Right ventricle myocardium inferior (tissue), 1 donor: ENCODE measurements at regions of chr2 and their contacts with region 1.

Region 1: GRCh38 chr2:101252408-101253012 is at the start of gene CNOT11:
- DNase-seq: peak; percentile 99
- ATAC-seq: peak; percentile 96
- total RNA-seq, gene CNOT11: 39.0 TPM

Region 2: DNA sequence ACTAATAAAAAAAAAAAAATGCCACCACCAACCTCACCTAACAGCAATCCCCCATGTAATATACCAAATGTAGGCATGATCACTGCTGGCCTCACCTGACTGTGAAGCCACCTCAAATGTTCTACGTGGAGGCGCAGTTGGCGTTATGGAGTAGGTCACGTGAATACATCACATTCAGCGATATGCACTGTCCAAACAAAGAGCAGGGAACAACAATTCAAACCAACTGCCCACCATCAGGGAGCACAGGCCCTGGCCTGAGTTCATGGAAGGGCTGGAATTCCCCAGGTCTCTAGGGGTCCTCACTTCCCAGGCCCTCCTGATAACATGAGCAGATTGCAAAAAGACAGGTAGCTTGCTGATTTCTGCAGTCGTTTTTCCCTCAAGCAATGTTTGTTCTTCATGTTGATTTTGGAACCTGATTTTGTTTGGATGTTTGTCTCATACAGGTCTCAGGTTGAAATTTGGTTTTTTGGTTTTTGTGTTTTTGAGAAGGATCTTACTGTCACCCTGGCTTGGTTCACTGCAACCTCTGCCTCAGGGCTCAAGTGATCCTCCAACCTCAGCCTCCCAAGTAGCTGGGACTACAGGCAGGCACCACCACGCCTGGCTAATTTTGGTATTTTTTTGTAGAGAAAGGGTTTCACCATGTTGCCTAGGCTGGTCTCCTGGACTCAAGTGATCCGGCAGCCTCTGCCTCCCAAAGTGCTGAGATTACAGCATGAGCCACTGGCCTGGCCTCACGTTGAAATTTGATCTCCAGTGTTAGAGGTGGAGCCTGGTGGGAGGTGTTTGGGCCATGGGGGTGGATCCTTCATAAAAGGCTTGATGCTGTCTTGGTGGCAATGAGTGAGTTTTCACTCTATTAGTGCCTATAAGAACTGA is 116.9 kb before region 1 on chr2:
- intact Hi-C with region 1: no loop called
- DNase-seq: no peak
- ATAC-seq: no peak

Region 3: DNA sequence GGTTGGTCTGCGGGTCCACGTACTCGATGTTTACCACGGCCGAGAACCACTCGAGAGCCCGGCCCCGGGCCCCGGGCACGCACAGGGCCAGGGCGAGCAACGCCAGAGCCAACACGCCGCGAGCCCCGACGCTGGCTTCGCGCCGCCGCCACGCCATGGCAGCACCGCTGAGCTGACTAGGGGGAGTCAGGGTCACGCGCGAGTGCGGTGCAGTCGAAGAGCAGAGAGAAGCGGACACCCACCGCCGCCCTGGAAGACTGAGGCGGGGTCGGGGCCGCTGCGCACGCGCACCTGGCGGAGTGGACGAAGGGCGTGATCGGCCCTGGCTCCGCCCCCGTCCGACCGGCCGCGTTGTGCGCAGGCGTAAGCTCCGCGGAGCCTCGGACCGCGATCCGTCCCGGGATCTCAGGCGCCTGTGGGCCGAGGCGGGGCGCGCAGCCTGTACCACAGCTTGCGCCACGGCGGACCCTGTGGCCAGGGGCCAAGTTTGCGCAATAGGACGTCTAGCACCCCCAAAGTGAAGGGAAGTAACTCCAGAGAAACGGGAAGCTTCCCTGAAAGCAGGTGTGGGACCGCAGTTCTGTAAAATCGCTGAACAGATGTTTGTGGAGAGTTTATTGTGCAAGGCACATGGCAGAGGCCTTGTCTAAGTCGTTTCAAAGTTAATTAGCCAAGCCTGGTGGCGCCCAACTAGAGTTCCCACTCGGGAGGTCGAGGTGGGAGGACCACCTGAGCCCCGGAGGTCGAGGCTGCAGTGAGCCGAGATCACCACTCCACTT is 56.1 kb after region 1 on chr2 and contains the start of gene RNF149:
- intact Hi-C with region 1: loop called (anchors 5 kb)
- DNase-seq: peak; percentile 98
- ATAC-seq: peak; percentile 97
- total RNA-seq, gene RNF149: 15.6 TPM

Region 4: DNA sequence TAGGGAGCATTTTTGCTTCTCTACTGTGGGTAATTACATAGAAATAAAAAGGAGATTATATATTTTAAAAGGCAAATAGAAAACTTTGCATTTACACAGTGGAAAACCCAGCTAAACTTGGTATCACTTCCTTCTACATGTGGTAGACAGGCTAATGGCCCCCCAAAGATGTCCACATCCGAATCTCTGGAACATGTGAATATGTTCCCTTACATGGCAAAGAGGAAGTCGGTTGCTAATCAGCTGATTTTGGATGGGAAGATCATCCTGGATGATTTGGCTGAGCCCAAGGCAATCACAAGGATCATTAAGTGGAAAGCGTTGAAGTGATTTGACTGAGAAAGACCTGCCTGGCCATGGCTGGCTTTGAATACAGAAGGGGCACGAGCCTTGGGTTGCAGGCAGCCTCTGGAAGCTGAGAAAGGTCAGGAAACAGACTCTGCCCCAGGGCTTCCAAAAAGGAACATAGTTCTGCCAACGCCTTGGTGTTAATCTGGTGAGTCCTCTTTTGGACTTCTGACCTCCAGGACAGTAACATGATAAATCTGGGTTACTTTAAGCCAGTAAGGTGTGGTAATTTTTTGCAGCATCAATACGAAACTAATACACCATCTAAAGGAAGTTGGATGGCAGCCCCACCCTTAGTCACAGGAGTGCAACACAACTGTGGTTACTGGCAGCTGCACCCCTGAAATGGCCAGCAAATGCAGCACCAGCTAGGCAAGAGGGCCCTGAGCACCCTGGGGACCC is 108.8 kb after region 1 on chr2:
- intact Hi-C with region 1: no loop called
- DNase-seq: no peak
- ATAC-seq: no peak

Region 5: DNA sequence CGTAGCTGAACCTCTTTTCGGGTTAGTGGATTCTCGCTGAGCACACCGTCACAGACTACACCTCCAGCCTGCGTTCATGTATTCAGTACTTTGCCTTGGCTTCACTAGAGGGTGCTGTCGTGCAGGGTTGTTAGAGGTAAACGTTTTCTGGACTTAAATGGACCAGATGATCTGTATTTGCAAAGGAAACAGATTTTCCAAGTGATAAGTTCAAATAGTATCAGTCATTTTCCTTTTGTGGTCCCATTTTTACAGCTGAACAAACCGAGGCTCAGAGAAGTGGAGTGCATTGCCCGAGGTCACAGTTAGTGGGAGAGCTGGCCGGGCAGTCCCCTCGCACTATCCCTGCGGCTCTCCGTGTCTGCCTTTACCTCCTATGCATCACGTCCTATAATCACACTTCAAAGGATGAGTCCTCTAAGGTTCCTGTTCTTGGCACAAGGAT is 570.9 kb after region 1 on chr2:
- intact Hi-C with region 1: no loop called
- DNase-seq: peak; percentile 43
- ATAC-seq: peak; percentile 69